B cell (primary cell): ENCODE measurements at regions of chr13 and their contacts with region 1.

Region 1: DNA sequence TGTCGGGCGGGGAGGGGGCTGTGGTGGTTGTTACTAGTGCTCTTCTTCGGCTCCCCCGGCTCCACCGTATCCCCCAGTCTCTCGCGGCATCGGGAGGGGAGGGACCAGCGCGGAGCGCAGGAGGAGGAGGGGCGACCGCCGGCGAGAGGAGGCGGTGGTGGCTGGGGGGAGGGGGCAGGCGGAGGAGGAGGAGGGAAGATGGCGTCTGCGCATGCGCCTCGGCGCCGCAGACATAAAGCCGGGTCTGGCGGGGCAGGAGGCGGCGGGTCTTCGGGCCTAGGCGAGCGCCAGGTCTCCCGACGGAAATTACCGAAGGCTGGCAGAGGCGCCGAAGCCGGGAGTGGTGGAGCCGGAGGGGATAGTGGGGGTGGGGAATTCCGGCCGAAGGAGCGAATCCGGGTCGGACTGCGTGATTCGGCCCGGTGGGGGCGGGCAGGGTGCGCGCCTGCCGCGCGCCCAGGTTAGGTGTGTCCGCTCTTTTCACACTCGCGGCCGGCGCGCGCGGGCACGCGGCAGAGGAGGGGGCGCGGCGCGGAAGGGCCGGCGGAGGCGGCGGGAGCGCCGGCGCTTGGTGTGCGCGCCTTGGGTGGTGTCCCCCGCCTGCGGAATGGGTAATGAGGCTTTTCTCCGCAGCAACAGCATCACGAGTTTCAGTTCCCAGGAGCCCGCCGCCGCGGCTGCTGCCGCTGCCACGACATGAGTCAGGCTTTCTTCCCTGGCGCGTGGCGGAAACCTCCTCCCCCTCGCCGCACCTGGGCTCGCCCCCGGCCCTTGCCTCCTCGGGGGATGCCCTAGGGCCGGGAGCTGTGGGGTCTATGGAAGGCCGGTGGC is 1.3 kb upstream of the TSC22D1 start:
- DNase-seq: peak; percentile 97
- ATAC-seq: peak; percentile 74
- H3K4me3 ChIP-seq: peak overlapping the region; percentile 50 to 94 (median 77)
- H3K4me3 Mint-ChIP-seq: peak overlapping the region; percentile 95
- H3K27ac ChIP-seq: peak overlapping the region; percentile 97 to 98
- H3K27ac Mint-ChIP-seq: peak overlapping the region; percentile 97
- H3K4me1 ChIP-seq: peaks cover 13 to 18% of the 10 kb centered on the region in 2 donors
- H3K4me1 Mint-ChIP-seq: peaks cover 30% of the 10 kb centered on the region
- H3K27me3 ChIP-seq: no peaks in the 10 kb centered on the region
- H3K27me3 Mint-ChIP-seq: peaks cover 1% of the 10 kb centered on the region
- CTCF ChIP-seq: no peak

Region 2: DNA sequence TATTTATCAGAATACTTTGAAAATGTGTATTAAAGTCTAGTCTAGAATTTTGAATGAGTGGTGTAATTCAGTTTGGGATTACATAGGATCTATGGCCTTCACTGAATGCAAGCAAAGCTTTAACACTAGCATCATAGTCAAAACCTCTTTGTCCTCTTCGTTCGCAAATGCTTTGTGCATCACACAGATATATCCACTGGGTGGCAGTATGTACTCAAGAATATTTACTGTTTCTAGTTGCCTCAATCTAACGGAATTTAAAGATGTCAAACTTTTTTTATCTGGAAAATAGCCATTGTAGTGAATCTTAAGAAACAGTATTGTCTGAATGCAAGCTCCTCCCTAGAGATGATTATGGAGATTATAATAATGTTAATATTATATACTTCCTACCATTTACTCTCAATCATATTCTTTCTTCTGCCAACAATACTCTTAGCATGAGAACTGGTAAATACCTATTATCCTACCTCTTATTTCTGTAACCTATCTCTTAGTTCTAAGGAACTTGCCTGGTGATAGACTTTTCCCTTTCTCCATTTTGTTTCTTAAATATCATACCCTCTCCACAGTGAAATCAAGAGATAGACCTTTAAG is 671.9 kb before region 1 on chr13:
- CTCF ChIA-PET with region 1: no interaction called
- POLR2A ChIA-PET with region 1: no interaction called
- intact Hi-C with region 1: loop called (anchors 10 kb)
- DNase-seq: peak; percentile 70
- ATAC-seq: peak; percentile 72
- H3K4me3 ChIP-seq: no peak overlapping the region
- H3K4me3 Mint-ChIP-seq: no peak overlapping the region
- H3K27ac ChIP-seq: no peak overlapping the region
- H3K27ac Mint-ChIP-seq: no peak overlapping the region
- H3K4me1 ChIP-seq: no peaks in the 10 kb centered on the region
- H3K4me1 Mint-ChIP-seq: peaks cover 1% of the 10 kb centered on the region
- H3K27me3 ChIP-seq: no peaks in the 10 kb centered on the region
- H3K27me3 Mint-ChIP-seq: peaks cover 27% of the 10 kb centered on the region
- CTCF ChIP-seq: peak; percentile 90

Region 3: DNA sequence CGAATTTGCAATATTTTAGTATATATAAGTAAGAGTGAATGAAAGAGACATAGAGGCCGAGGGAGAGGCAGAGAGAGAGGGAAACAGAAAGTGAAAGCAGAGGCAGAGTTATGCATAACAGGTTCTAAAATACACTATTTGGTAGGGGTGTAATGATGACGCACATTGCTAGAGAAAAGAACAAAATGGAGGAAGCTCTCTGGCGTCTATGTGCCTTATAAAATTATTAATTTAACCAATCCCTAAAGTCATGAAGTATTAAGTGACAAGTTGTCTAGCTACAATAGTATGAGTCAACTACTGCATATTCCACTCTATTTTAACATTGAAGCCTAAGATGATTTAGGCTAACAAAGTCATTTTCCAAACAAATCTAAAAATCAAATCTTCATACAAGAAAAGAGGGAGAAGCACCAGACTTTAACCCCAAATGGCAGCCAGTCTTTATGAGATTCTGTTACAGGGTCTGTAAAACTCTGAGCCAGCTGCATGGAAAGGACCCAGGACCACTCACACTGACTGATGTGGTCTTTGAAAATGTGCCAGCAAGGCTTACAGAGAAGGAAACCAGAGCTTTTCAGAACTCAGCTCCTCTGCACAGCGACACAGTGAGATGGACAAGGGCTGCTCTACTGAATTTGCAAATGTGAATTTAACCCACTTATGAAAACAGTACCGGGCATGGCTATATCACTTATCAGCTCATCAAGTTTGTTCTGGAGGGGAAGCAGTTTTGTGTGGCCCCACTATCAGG is 302.8 kb before region 1 on chr13:
- CTCF ChIA-PET with region 1: no interaction called
- POLR2A ChIA-PET with region 1: no interaction called
- intact Hi-C with region 1: loop called (anchors 5 kb)
- DNase-seq: peak; percentile 82
- ATAC-seq: peak; percentile 84
- H3K4me3 ChIP-seq: peak overlapping the region in 3 of 5 experiments; percentile 31 to 38 (median 35)
- H3K4me3 Mint-ChIP-seq: peak overlapping the region; percentile 65
- H3K27ac ChIP-seq: peak overlapping the region; percentile 74 to 83
- H3K27ac Mint-ChIP-seq: peak overlapping the region; percentile 85
- H3K4me1 ChIP-seq: peaks cover 29 to 44% of the 10 kb centered on the region in 2 donors
- H3K4me1 Mint-ChIP-seq: peaks cover 40% of the 10 kb centered on the region
- H3K27me3 ChIP-seq: no peaks in the 10 kb centered on the region
- H3K27me3 Mint-ChIP-seq: no peaks in the 10 kb centered on the region
- CTCF ChIP-seq: no peak

Region 4: GRCh38 chr13:44969551-44970484 is 392.4 kb after region 1 on chr13:
- CTCF ChIA-PET with region 1: interaction called, 3 read pairs
- POLR2A ChIA-PET with region 1: no interaction called
- intact Hi-C with region 1: loop called (anchors 5 kb)
- DNase-seq: peak; percentile 37
- ATAC-seq: no peak
- H3K4me3 ChIP-seq: no peak overlapping the region
- H3K4me3 Mint-ChIP-seq: no peak overlapping the region
- H3K27ac ChIP-seq: no peak overlapping the region
- H3K27ac Mint-ChIP-seq: no peak overlapping the region
- H3K4me1 ChIP-seq: peaks cover 9 to 16% of the 10 kb centered on the region in 2 donors
- H3K4me1 Mint-ChIP-seq: no peaks in the 10 kb centered on the region
- H3K27me3 ChIP-seq: no peaks in the 10 kb centered on the region
- H3K27me3 Mint-ChIP-seq: no peaks in the 10 kb centered on the region
- CTCF ChIP-seq: peak; percentile 75

Region 5: DNA sequence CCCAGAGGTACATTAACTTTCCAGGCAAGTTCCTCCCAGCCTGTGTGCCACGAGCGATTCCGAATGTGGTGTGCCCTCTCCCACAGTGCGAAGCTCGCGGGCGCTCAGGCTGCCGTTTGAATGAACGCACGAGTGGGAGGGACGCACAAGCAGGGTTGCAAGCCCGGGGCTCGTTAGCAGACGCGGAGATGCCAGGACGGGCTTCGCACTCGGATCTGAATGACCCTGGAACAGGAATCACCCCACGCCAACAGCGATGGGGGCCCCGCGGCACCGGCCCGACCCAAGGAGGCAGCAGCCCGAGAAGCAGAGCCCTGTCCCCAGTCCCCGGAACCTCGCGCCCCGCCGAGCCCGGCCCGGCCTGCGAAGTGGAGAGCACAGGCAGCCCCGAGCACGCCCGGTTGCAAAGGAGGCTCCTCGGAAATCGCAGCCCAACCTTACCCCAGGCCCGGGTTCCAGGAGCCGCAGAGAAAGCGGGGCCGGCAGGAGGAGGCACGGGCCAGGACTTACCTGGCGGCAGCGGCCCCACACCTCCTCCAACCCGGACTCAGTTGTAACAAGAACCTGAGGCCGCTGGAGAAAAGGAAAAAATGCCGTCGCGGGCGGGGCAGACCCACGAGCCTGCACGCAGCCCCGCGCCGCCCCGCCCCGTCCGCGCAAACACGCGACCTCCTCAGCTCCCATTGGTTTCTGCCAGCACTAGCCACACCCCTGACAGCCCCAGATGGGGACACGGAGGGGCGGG is 840.5 kb after region 1 on chr13 and contains the start of gene SLC25A30:
- CTCF ChIA-PET with region 1: no interaction called
- POLR2A ChIA-PET with region 1: no interaction called
- intact Hi-C with region 1: loop called (anchors 2 kb)
- DNase-seq: peak; percentile 92
- ATAC-seq: peak; percentile 95
- H3K4me3 ChIP-seq: peak within 1 kb of the TSS; percentile 68 to 91 (median 90)
- H3K4me3 Mint-ChIP-seq: peak within 1 kb of the TSS; percentile 97
- H3K27ac ChIP-seq: peak within 1 kb of the TSS; percentile 70 to 87
- H3K27ac Mint-ChIP-seq: peak within 1 kb of the TSS; percentile 96
- H3K4me1 ChIP-seq: peaks cover 9 to 11% of the 10 kb centered on the region in 2 donors
- H3K4me1 Mint-ChIP-seq: peaks cover 21% of the 10 kb centered on the region
- H3K27me3 ChIP-seq: no peaks in the 10 kb centered on the region
- H3K27me3 Mint-ChIP-seq: no peaks in the 10 kb centered on the region
- CTCF ChIP-seq: no peak
- total RNA-seq, gene SLC25A30: 16.9 and 25.8 TPM in 2 replicates

Region 6: DNA sequence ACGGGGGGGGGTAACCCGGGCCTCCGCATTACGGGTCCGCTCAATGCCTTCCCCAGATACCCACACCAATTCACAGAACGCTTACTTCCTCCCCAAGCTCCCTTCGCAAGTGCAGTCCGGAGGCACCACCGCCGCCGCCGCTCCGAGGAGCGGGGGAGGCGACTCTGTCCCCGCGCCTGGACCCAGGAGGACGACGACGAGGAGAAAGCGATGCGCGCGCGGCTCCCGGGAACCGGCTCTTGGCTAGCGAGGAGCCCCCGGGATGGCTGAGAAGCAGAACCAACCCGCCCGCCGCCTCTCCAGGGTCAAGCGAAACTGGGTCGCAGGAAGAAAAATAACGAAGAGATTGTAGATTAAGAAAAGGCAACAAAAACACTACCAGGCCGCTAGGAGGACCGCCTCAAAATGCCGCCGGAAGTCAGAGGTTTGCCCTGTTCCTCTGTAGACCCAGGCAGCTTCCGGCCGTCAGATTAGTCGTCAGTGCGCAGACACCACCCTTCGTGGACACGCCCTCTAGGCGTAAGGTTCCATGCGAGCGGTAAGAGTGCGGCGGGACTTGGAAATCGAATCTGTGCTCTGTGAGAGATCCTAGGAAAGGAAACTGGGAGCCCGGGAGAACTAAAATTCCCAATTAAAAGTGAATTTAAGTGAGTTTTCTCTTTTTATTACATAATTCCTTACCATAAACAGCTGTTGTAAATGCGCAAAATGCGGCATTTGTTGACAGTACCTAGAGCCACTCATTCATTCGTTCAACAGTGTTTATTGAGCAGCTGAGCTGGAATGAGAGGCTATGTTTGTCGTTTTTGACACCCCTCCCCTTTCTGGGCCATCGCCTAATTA is 1475.1 kb after region 1 on chr13 and contains the start of gene ZC3H13:
- CTCF ChIA-PET with region 1: no interaction called
- POLR2A ChIA-PET with region 1: no interaction called
- intact Hi-C with region 1: loop called (anchors 10 kb)
- DNase-seq: peak; percentile 95
- ATAC-seq: peak; percentile 99
- H3K4me3 ChIP-seq: peak within 1 kb of the TSS; percentile 84 to 95 (median 88)
- H3K4me3 Mint-ChIP-seq: peak within 1 kb of the TSS; percentile 96
- H3K27ac ChIP-seq: peak within 1 kb of the TSS; percentile 89 to 96
- H3K27ac Mint-ChIP-seq: peak within 1 kb of the TSS; percentile 95
- H3K4me1 ChIP-seq: peaks cover 19 to 26% of the 10 kb centered on the region in 2 donors
- H3K4me1 Mint-ChIP-seq: peaks cover 33% of the 10 kb centered on the region
- H3K27me3 ChIP-seq: peaks cover 0 to 3% (median 0%) of the 10 kb centered on the region in 4 experiments
- H3K27me3 Mint-ChIP-seq: peaks cover 6% of the 10 kb centered on the region
- CTCF ChIP-seq: peak; percentile 65
- total RNA-seq, gene ZC3H13: 61.9 and 65.7 TPM in 2 replicates